ENCODE measurements at regions of chr19 and their contacts with region 1.

Region 1: DNA sequence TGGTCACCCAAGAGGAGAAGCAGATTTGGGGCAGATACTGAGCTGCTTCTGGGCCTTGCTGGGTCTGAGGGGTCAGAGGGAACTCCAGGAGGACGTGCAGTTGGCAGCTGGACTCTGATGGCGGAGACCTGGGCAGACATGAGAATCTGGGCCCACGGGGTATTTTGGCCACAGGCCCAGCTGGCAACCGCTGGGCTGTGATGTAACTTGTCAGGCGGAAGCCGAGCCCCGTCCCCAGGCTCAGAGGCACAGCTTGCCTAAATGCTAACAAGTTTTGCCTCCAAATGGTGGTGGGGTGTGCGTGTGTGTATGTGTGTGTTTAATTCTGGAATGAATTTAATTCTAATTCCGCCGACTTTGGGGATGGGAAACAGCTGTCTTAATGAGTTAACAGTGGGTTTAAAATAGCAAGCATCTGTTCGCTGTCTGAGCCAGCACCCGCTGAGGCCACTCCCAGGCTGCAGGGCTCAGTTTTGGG is 11.6 kb downstream of the ZNRF4 start:
- DNase-seq: no peak
- ATAC-seq: no peak
- H3K4me3 ChIP-seq: no peak overlapping the region
- H3K27ac ChIP-seq: no peak overlapping the region
- H3K4me1 ChIP-seq: peaks cover 10% of the 10 kb centered on the region
- H3K27me3 ChIP-seq: no peaks in the 10 kb centered on the region
- CTCF ChIP-seq: no peak

Region 2: GRCh38 chr19:5403968-5404640 is 62.7 kb before region 1 on chr19:
- CTCF ChIA-PET with region 1: no interaction called
- POLR2A ChIA-PET with region 1: no interaction called
- intact Hi-C with region 1: no loop called
- DNase-seq: peak; percentile 97
- ATAC-seq: peak; percentile 100
- H3K4me3 ChIP-seq: no peak overlapping the region
- H3K27ac ChIP-seq: no peak overlapping the region
- H3K4me1 ChIP-seq: no peaks in the 10 kb centered on the region
- H3K27me3 ChIP-seq: peaks cover 25% of the 10 kb centered on the region
- CTCF ChIP-seq: no peak

Region 3: DNA sequence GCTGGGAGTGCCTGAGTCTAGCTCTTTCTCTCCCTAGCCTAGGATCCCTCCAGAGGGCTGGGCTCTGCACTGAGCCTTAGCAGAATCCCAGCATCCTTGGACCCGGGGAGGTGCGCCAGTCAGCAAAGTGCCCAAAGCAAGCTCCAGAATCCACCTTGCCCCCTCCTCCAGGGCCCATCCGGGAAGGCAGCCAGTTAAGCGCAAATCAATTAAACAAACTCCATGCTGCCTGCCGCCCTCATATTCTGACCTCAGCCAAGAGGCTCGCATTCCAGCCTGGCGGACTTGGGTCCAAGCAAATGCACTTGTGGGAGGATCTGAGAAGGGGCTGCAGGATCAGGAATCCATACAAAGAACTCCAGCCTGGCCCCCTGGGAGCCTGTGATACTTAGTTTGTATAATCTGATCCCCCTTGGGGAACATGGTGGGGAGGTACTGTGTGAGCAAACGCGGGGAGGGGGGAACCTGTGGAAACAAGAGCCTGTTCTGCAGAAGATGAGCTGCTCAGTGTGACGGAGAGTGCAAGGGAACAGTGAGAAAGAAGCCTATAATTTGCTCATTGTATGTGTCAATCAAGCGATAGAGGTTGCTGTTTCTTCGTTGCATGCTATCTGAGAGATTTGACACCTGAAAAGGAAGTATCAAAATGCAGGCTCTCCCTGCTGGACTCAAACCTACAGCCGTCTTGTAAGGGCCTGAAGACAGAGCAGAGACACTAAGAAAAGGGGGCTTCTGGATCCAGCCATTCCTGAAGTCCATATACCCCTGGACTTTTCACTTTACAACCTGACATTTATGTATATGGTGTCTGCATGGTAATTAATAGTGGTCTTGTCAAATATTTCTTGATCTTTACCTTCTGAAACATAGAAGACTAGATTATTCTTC is 17.8 kb after region 1 on chr19:
- CTCF ChIA-PET with region 1: no interaction called
- POLR2A ChIA-PET with region 1: interaction called, 21 read pairs
- intact Hi-C with region 1: no loop called
- DNase-seq: no peak
- ATAC-seq: peak; percentile 62
- H3K4me3 ChIP-seq: no peak overlapping the region
- H3K27ac ChIP-seq: no peak overlapping the region
- H3K4me1 ChIP-seq: peaks cover 6% of the 10 kb centered on the region; the same call in 1 of the 2 replicates
- H3K27me3 ChIP-seq: peaks cover 11% of the 10 kb centered on the region
- CTCF ChIP-seq: no peak

Region 4: GRCh38 chr19:5577785-5578493 is 111.1 kb after region 1 on chr19:
- CTCF ChIA-PET with region 1: no interaction called
- POLR2A ChIA-PET with region 1: no interaction called
- intact Hi-C with region 1: no loop called
- DNase-seq: peak; percentile 95
- ATAC-seq: peak; percentile 83
- H3K4me3 ChIP-seq: peak overlapping the region; percentile 67
- H3K27ac ChIP-seq: peak overlapping the region; percentile 83
- H3K4me1 ChIP-seq: peaks cover 5% of the 10 kb centered on the region; the same call in 1 of the 2 replicates
- H3K27me3 ChIP-seq: no peaks in the 10 kb centered on the region
- CTCF ChIP-seq: peak; percentile 99

Measured in PC-3 (cell line).